ENCODE measurements at regions of chr7 and their contacts with region 1.

Region 1: GRCh38 chr7:6221340-6222319 is 50.8 kb downstream of the CYTH3 start:
- DNase-seq: peak; percentile 60
- H3K4me3 Mint-ChIP-seq: no peak overlapping the region
- H3K27ac Mint-ChIP-seq: peak overlapping the region; percentile 53
- H3K4me1 Mint-ChIP-seq: peaks cover 17% of the 10 kb centered on the region
- H3K27me3 Mint-ChIP-seq: peaks cover 5% of the 10 kb centered on the region

Region 2: GRCh38 chr7:6250364-6250833 is 28.8 kb after region 1 on chr7:
- CTCF ChIA-PET with region 1: no interaction called
- POLR2A ChIA-PET with region 1: interaction called, 6 read pairs
- intact Hi-C with region 1: loop called (anchors 1 kb)
- DNase-seq: peak; percentile 71
- H3K4me3 Mint-ChIP-seq: no peak overlapping the region
- H3K27ac Mint-ChIP-seq: peak overlapping the region; percentile 63
- H3K4me1 Mint-ChIP-seq: peaks cover 24% of the 10 kb centered on the region
- H3K27me3 Mint-ChIP-seq: peaks cover 28% of the 10 kb centered on the region

Region 3: DNA sequence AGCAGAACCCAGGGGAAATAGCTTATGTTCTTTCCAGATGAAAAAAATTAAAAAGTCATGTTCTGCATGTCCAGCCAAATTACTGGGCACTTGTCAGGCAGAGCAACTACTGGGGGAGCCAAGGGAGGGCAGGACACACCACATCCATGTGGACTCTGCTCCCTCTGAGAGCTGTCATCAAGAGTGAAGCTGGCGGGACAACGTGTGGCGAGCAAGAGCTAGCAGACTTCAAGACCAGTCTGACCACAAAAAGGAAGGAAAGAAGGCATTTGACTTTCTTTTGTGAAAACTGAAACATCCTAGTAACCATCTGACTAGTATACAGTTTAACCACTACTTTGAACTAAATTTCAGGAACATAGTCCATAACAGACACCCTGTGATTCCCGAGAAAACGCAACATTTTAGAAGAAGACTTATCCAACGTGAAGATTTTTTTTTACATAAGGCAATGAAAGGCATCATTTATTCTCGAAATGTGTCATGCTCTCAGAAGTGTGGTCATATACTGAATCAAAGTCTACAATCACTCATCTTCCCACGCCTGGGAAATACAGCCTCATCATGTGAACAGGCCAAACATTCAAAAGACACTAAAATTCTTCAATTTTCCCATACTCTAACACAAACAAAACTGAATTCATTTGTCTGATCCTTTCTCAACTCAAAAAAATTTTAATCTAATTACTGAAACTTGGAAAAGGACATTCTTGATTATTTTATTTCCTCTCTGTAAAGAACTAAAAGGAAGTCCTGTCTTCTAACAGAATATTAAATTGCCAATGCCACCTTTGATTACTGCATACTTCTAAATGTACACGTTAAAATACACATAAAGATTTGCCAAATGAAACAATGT is 35.3 kb after region 1 on chr7:
- CTCF ChIA-PET with region 1: no interaction called
- POLR2A ChIA-PET with region 1: interaction called, 4 read pairs
- intact Hi-C with region 1: loop called (anchors 1 kb)
- DNase-seq: peak; percentile 60
- H3K4me3 Mint-ChIP-seq: no peak overlapping the region
- H3K27ac Mint-ChIP-seq: no peak overlapping the region
- H3K4me1 Mint-ChIP-seq: peaks cover 42% of the 10 kb centered on the region
- H3K27me3 Mint-ChIP-seq: peaks cover 21% of the 10 kb centered on the region

Region 4: DNA sequence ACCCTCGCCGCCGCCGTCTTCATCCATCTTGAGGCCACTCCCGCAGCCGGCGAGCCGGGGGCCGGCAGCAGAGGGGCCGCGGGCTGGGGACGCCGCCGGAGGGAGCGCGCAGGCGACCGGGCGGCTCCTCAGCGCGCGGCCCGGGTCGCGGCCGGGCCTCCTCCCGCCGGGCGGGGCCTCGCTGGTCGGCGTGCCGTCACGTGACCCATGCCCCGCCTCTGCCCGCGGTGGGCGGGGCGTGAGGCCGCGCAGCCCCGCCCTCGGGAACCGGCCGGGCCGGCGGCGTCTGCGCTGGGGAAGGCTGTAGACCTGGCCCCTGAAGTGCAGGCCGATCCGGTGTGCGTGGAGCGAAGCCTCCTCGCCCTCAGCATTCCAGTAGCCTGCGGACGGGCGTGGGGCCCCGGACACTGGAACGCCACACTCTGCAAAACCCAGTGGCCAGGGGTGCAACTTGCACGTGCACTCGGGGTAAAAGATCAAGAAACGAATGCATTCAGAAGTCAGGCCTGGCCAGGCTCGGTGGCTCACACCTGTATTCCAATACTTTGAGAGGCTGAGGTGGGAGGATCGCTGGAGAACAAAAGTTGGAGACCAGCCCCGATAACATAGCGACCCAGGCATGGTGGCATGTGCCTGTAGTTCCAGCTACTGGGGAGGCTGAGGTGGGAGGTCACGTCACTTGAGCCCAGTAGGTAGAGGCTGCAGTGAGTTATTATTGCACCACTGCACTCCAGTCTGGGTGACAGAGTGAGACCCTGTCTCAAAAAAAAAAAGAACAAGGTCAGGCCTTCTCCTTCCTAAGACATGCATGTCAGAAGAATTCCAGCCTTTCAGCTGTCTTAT is 51.1 kb after region 1 on chr7 and contains the start of gene CYTH3:
- CTCF ChIA-PET with region 1: no interaction called
- POLR2A ChIA-PET with region 1: interaction called, 5 read pairs
- intact Hi-C with region 1: loop called (anchors 5 kb)
- DNase-seq: peak; percentile 82
- H3K4me3 Mint-ChIP-seq: peak within 1 kb of the TSS; percentile 80
- H3K27ac Mint-ChIP-seq: no peak within 1 kb of the TSS
- H3K4me1 Mint-ChIP-seq: peaks cover 15% of the 10 kb centered on the region
- H3K27me3 Mint-ChIP-seq: peaks cover 26% of the 10 kb centered on the region
- total RNA-seq, gene CYTH3: 1.6 to 2.0 TPM

Region 5: GRCh38 chr7:6614953-6615722 is 393.5 kb after region 1 on chr7 and contains the start of gene ZNF853:
- CTCF ChIA-PET with region 1: no interaction called
- POLR2A ChIA-PET with region 1: no interaction called
- intact Hi-C with region 1: no loop called
- DNase-seq: no peak
- H3K4me3 Mint-ChIP-seq: peak within 1 kb of the TSS; percentile 50
- H3K27ac Mint-ChIP-seq: no peak within 1 kb of the TSS
- H3K4me1 Mint-ChIP-seq: peaks cover 13% of the 10 kb centered on the region
- H3K27me3 Mint-ChIP-seq: peaks cover 15% of the 10 kb centered on the region
- total RNA-seq, gene ZNF853: 0.99 to 1.2 TPM

Measured in activated CD4-positive, alpha-beta memory T cell treated with anti-CD3 and anti-CD28 coated beads for 36 hours (primary cell).